Calu3 (cell line): ENCODE measurements at regions of chrX and their contacts with region 1.

Region 1: GRCh38 chrX:108224727-108225621 is 133.4 kb downstream of the ATG4A start:
- DNase-seq: peak; percentile 9
- H3K4me3 Mint-ChIP-seq: no peak overlapping the region
- H3K27ac Mint-ChIP-seq: no peak overlapping the region
- H3K4me1 Mint-ChIP-seq: no peaks in the 10 kb centered on the region
- H3K27me3 Mint-ChIP-seq: no peaks in the 10 kb centered on the region
- CTCF ChIP-seq: peak; percentile 43

Region 2: DNA sequence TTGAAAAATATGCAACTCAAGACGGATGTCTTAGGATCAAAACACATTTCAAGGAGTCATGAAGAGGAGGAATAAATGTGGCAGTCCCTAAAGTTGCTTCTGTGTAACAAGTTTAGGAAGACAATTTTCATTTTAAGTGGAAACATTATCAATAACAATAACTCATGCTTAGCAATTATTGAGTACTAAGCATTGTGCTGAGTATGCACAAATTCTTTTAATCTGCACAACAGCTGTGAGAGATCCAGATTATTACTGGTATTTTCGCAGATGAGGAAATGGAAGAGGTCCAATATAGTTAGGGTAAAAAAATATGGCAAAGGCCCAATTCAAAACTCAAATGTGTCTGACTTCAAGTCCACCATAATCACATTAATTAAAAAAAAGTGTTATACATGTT is 239.9 kb before region 1 on chrX:
- CTCF ChIA-PET with region 1: no interaction called
- intact Hi-C with region 1: no loop called
- DNase-seq: no peak
- H3K4me3 Mint-ChIP-seq: no peak overlapping the region
- H3K27ac Mint-ChIP-seq: no peak overlapping the region
- H3K4me1 Mint-ChIP-seq: no peaks in the 10 kb centered on the region
- H3K27me3 Mint-ChIP-seq: no peaks in the 10 kb centered on the region
- CTCF ChIP-seq: no peak

Region 3: GRCh38 chrX:108299101-108299591 is 74.2 kb after region 1 on chrX:
- CTCF ChIA-PET with region 1: interaction called, 17 read pairs
- intact Hi-C with region 1: loop called (anchors 1 kb)
- DNase-seq: no peak
- H3K4me3 Mint-ChIP-seq: no peak overlapping the region
- H3K27ac Mint-ChIP-seq: no peak overlapping the region
- H3K4me1 Mint-ChIP-seq: peaks cover 15% of the 10 kb centered on the region
- H3K27me3 Mint-ChIP-seq: no peaks in the 10 kb centered on the region
- CTCF ChIP-seq: no peak

Region 4: GRCh38 chrX:108304210-108304609 is 79.2 kb after region 1 on chrX:
- CTCF ChIA-PET with region 1: interaction called, 17 read pairs
- intact Hi-C with region 1: loop called (anchors 1 kb)
- DNase-seq: peak; percentile 26
- H3K4me3 Mint-ChIP-seq: no peak overlapping the region
- H3K27ac Mint-ChIP-seq: no peak overlapping the region
- H3K4me1 Mint-ChIP-seq: peaks cover 24% of the 10 kb centered on the region
- H3K27me3 Mint-ChIP-seq: no peaks in the 10 kb centered on the region
- CTCF ChIP-seq: peak; percentile 21

Region 5: DNA sequence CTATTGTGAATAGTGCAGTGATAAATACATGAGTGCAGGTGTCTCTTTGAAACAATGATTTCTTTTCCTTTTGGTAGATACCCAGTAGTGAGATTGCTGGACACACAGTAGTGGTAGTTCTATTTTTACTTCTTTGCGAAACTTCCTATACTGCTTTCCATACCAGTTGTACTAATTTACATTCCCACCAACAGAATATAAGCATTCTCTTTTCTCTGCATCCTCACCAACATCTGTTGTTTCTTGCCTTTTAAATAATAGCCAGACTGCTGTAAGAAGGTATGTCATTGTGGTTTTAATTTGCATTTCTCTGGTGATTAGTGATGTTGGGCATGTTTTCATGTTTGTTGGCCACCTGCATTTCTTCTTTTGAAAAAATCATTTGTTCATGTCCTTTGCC is 107.3 kb after region 1 on chrX:
- CTCF ChIA-PET with region 1: no interaction called
- intact Hi-C with region 1: no loop called
- DNase-seq: no peak
- H3K4me3 Mint-ChIP-seq: no peak overlapping the region
- H3K27ac Mint-ChIP-seq: no peak overlapping the region
- H3K4me1 Mint-ChIP-seq: no peaks in the 10 kb centered on the region
- H3K27me3 Mint-ChIP-seq: no peaks in the 10 kb centered on the region
- CTCF ChIP-seq: no peak

Region 6: GRCh38 chrX:108537005-108537404 is 312.0 kb after region 1 on chrX:
- CTCF ChIA-PET with region 1: interaction called, 5 read pairs
- intact Hi-C with region 1: loop called (anchors 1 kb)
- DNase-seq: peak; percentile 33
- H3K4me3 Mint-ChIP-seq: no peak overlapping the region
- H3K27ac Mint-ChIP-seq: no peak overlapping the region
- H3K4me1 Mint-ChIP-seq: no peaks in the 10 kb centered on the region
- H3K27me3 Mint-ChIP-seq: no peaks in the 10 kb centered on the region
- CTCF ChIP-seq: peak; percentile 52

Region 7: DNA sequence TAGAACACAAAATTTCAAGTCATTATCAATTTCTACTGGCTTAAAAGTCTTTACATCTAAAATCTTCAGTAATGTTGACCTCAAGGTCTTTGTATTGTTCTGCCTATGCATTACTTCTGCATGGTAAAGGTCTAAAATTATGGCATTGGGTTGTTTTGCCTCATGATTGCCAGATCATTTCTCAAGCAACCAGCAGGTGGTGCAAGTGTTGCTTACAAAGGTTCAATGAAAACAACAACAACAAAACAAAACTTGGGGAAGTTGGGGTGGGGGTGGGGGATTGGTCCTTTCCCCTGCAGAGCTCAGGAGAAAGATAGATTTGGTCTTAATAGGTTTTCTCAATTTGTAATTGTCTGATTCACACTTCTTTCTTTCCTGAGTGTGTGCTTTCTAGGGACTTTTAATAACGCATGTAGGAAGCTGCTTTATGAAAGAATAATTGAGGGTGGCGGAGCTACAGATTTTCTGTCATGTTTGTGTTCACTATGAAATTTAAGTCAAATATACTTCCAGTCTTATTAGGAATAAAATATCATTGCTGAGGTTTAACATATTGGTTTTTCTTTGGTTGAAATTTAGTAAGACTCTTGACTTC is 359.7 kb after region 1 on chrX:
- CTCF ChIA-PET with region 1: interaction called, 11 read pairs
- intact Hi-C with region 1: no loop called
- DNase-seq: peak; percentile 10
- H3K4me3 Mint-ChIP-seq: no peak overlapping the region
- H3K27ac Mint-ChIP-seq: no peak overlapping the region
- H3K4me1 Mint-ChIP-seq: no peaks in the 10 kb centered on the region
- H3K27me3 Mint-ChIP-seq: no peaks in the 10 kb centered on the region
- CTCF ChIP-seq: peak; percentile 34